AG04449 (cell line): ENCODE measurements at regions of chr1 and their contacts with region 1.

Region 1: GRCh38 chr1:182604169-182605164 is at the start of gene RGS16:
- DNase-seq: no peak
- H3K4me3 ChIP-seq: peak within 1 kb of the TSS; percentile 57
- CTCF ChIP-seq: no peak

Region 2: DNA sequence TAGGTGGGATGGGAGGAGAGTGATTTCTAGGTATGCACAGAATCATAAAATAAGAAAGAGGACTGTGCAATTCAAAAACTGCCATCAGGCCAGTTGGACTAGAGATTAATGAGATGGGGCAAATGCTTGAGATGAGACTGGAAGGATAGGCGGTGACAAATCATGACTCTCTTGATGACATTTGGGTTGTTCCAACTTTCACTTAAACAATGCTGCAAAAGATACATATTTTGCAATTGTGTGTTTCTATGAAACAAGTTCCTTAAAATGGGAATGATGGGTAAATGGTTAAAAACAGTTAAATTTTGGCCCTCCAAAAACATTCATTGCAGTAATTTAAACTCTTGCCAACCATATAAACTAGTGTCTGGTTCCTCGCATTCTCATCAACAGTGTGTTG is 70.6 kb before region 1 on chr1:
- CTCF ChIA-PET with region 1: no interaction called
- POLR2A ChIA-PET with region 1: no interaction called
- DNase-seq: no peak
- H3K4me3 ChIP-seq: no peak overlapping the region
- CTCF ChIP-seq: no peak

Region 3: GRCh38 chr1:182588500-182589452 is 15.7 kb before region 1 on chr1 and contains the start of gene RNASEL:
- CTCF ChIA-PET with region 1: interaction called, 184 read pairs
- POLR2A ChIA-PET with region 1: no interaction called
- DNase-seq: no peak
- H3K4me3 ChIP-seq: peak within 1 kb of the TSS; percentile 73
- CTCF ChIP-seq: no peak

Region 4: DNA sequence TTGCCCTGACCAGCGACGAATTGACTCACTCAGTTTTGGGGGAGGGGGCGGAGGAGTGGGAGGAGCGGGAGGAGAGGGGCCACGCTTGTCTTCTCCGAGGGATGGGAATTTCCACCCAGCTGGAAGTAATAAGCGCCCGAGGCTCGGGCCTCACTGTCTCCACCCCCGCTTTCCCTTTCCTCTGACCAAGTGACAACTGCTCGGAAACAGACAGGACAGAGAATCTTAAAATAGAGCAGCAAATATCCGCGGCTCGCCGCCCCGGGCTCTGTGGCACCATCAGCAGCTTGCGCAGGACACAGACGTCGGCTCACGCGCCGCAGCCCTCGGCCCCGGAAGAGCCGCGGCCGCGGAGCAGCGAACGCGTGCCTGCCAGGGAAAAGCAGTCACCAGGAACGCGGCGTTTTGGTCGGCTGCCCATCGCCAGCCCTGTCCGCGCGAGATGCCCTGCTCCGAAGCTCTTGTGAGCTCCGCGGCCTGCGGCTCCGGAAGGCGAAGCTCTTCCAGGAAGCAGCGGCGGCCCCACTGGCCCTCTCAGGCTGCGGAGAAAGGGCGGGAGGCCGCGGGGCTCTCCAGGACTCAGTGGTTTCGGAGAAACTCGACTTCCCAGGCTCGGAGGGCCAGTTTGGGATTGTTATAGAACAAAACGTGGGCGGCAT is 10.5 kb after region 1 on chr1:
- CTCF ChIA-PET with region 1: interaction called, 184 read pairs
- POLR2A ChIA-PET with region 1: interaction called, 8 read pairs
- DNase-seq: no peak
- H3K4me3 ChIP-seq: peak overlapping the region; percentile 51
- CTCF ChIP-seq: no peak

Region 5: DNA sequence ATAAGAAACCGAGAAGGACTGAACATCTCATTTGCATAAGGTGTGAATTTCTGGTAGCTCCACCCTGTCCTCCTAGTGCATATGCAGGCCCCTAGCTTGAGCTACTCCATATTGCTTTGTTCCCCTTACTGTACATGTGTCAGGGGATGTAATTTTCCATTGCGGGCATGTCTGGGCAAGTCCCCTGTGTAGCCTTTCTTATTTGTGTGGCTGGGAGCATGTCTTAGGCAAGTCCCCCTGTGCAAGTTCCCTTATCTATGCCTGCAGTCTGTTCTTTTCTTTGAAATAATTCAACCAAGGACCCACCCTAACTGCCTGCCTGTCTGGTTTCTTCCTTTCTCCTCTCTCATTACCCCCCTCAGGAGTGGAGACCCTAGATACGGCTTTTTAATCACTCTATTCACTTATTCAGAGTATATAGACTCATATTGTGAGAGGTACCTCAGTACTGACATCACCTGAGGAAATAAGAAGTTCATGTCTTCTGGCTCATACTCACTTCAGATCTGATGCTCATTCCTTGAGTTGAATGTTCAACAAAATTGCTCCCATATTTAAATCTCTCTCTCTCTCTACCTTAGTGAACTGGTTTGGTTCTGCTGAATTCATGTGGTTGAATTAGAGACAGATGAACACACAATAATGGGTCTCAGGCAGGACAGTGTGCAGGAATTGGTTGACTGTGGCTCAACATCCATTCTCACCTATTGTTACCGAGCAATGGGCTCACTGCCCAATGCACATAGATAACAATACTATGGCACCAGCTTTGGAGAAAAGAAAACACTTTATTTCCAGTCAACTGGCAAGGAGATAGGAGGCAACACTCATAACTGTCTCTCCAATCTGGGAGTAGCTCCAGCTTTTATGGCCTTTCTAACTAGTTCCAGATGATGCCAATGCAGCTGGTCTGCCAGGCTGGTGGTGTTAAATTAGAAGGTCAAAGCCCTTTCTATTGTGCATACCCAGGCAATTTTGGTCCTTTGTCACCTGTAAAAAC is 157.2 kb after region 1 on chr1:
- CTCF ChIA-PET with region 1: interaction called, 11 read pairs
- POLR2A ChIA-PET with region 1: no interaction called
- DNase-seq: no peak
- H3K4me3 ChIP-seq: no peak overlapping the region
- CTCF ChIP-seq: no peak

Region 6: GRCh38 chr1:182789138-182790076 is 184.9 kb after region 1 on chr1 and contains the start of gene NPL:
- CTCF ChIA-PET with region 1: interaction called, 997 read pairs
- POLR2A ChIA-PET with region 1: no interaction called
- DNase-seq: no peak
- H3K4me3 ChIP-seq: peak within 1 kb of the TSS; percentile 68
- CTCF ChIP-seq: no peak